Left colon (tissue), 2 donors: ENCODE measurements at regions of chr12 and their contacts with region 1.

Region 1: DNA sequence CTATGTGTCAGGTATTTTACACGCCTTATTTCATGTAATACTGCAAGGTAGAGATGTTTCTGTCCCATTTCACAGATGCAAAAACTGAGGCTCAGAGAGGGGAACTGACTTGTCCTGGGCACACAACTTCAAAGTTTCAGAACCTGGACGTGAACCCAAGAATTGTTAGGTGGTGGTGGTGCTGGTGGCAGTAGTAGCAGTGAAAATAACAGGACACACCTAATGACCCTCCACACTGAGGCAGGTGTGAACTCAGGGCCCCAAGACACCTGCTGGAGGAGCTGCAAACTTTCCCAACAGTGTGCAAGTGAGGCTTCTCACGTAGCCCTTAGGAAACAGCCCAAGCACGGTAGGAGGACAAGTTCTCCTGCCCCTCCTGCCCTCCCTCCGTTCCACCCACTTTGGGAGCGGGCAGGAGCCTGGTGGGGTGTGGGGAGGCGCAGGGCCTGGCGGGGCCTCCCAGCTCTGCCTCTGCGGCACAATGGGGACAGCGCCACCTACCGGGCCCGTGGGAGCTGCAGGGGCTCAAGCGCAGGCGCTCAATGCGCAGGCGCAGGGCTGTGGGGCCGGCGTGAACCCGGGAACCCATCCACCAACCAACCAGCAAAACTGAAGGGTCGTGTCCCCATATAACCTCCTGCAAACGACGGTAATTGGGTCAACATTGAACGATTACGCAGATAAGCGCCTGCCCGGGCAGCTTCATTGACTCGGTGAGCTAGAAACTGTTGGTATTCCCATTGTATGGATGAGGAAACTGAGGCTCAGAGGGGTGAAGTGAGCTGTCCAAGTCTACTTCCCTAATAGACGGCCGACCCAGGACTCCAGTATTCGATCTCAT is 12.0 kb upstream of the TRPV4 start:
- DNase-seq: peak; percentile 71 to 94
- ATAC-seq: peak; percentile 90

Region 2: DNA sequence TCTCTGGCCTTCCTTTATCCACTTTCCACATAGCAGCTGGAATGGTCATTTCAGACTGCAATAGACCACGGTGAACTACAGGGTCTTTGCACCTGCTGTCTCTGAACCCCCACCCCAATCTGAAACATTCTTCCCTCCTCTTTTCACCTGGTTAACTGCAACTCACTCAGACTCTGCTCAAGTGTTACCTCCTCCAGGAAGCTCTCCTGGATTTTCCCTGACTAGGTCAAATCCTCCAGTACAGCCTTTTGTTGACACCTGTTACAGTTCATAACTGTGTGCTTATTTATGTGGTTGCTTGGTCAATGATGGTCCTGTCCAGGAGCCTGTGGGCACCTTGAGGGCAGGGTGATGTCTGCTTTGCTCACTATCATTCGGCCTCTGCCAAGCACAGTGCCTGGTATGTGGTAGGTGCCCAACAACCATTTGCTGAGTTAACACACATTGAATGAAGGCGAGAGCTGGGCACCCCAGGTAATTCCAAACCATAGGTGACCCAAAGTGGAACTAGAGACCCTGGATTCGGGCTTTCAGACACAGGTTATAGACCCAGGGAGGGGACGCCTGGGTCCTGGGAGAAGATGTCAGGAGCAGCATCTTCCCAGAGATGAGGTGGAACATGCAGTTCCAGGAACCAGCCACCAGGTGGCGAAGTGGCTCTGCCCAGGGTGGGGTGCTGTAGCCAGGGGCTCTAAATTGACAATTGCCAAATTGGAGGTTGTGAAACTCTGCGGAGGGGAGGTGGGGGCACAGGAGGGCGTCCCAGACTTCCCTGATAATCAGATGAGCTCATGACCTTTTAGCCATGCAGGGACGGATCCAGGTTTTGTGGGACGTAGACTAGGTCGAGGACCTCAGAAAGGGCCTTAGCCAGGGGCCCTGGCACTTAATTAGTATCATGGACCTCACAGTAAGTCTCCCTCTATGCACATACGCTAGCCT is 40.1 kb before region 1 on chr12:
- intact Hi-C with region 1: loop called in 1 of 2 experiments (anchors 5 kb)
- DNase-seq: peak; percentile 36 to 64
- ATAC-seq: peak; percentile 75

Region 3: GRCh38 chr12:109951751-109952150 is 106.5 kb after region 1 on chr12:
- intact Hi-C with region 1: no loop called
- DNase-seq: no peak
- ATAC-seq: no peak